Activated CD4-positive, alpha-beta T cell treated with anti-CD3 and anti-CD28 coated beads, Interleukin-2, amount 10 ng/mL, durations not matched to agents 24 days and 14 days (primary cell): ENCODE measurements at regions of chr4 and their contacts with region 1.

Region 1: GRCh38 chr4:184705692-184706091 is 28.2 kb downstream of the CENPU start:
- DNase-seq: peak; percentile 70
- H3K4me3 Mint-ChIP-seq: peak overlapping the region; percentile 9
- H3K27ac Mint-ChIP-seq: peak overlapping the region; percentile 55
- H3K4me1 Mint-ChIP-seq: peaks cover 22% of the 10 kb centered on the region
- H3K27me3 Mint-ChIP-seq: no peaks in the 10 kb centered on the region

Region 2: GRCh38 chr4:183686461-183686860 is 1019.2 kb before region 1 on chr4:
- intact Hi-C with region 1: no loop called
- DNase-seq: no peak
- H3K4me3 Mint-ChIP-seq: no peak overlapping the region
- H3K27ac Mint-ChIP-seq: no peak overlapping the region
- H3K4me1 Mint-ChIP-seq: no peaks in the 10 kb centered on the region
- H3K27me3 Mint-ChIP-seq: no peaks in the 10 kb centered on the region

Region 3: DNA sequence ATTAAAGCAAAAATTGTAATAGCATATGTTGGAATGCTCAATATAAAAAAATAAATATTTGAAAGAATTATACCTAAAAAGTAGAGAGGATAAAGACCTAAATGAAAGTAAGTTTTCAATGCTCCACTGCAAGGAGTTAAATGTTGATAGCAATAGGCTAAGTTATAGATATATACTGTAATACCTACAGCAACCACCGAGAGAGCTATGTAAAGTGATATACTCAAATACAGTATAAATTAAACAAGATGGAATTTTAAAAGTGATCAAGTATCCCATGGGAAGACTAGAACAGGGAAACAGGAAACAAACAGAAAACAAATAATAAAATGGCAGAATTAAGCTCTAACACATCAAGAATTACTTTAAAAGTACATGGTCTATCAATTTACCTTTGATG is 130.4 kb before region 1 on chr4:
- intact Hi-C with region 1: no loop called
- DNase-seq: no peak
- H3K4me3 Mint-ChIP-seq: no peak overlapping the region
- H3K27ac Mint-ChIP-seq: peak overlapping the region; percentile 77
- H3K4me1 Mint-ChIP-seq: peaks cover 14% of the 10 kb centered on the region
- H3K27me3 Mint-ChIP-seq: no peaks in the 10 kb centered on the region

Region 4: GRCh38 chr4:184664448-184665210 is 41.1 kb before region 1 on chr4:
- intact Hi-C with region 1: loop called (anchors 5 kb)
- DNase-seq: no peak
- H3K4me3 Mint-ChIP-seq: no peak overlapping the region
- H3K27ac Mint-ChIP-seq: no peak overlapping the region
- H3K4me1 Mint-ChIP-seq: peaks cover 27% of the 10 kb centered on the region
- H3K27me3 Mint-ChIP-seq: no peaks in the 10 kb centered on the region

Region 5: GRCh38 chr4:184693056-184693455 is 12.6 kb before region 1 on chr4:
- intact Hi-C with region 1: loop called (anchors 2 kb)
- DNase-seq: peak; percentile 8
- H3K4me3 Mint-ChIP-seq: no peak overlapping the region
- H3K27ac Mint-ChIP-seq: no peak overlapping the region
- H3K4me1 Mint-ChIP-seq: peaks cover 10% of the 10 kb centered on the region
- H3K27me3 Mint-ChIP-seq: no peaks in the 10 kb centered on the region

Region 6: GRCh38 chr4:184860018-184860779 is 154.5 kb after region 1 on chr4:
- intact Hi-C with region 1: no loop called
- DNase-seq: no peak
- H3K4me3 Mint-ChIP-seq: peak overlapping the region; percentile 28
- H3K27ac Mint-ChIP-seq: peak overlapping the region; percentile 60
- H3K4me1 Mint-ChIP-seq: peaks cover 39% of the 10 kb centered on the region
- H3K27me3 Mint-ChIP-seq: peaks cover 17% of the 10 kb centered on the region